Activated B cell treated with CpG ODN at 0.5 μM for 24 hours (primary cell): ENCODE measurements at regions of chr3 and their contacts with region 1.

Region 1: DNA sequence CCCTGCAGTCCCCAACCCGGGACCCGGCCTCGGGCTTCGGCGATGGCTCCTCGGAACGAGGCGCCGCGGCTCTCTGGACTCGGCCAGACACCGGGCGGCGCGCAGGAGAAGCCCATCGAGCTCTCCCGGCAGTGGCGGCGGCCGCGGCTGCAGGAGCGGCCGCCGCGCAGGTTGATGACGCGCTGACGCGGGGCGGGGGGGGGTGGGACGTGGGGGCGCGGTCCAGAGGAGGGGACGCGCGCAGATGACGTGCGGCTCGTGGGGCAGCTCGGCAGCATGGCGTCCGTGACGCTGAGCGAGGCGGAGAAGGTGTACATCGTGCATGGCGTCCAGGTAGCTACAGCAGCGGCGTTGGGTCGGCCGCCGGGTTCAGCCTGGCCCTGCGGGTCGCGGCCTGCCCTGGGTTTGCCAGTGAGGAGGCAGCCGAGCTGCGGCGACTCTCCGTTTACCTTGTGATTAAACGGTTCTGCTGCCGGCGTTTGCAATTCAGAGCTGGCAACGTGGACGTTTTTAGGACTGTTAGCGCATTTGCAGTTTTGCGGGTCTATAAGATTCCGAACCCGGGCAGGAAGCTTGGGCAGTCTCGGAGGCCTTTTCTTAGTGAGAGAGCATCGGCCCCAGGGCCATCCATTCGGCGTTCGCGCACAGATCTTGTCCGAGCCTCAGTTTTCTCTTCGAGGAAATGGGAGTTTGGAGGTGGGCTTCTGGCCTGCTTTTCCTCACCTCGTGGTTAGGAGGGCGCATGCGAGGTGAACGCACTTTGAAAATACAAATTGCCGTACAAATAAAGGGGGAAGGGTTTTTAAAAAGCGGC is at the starts of genes EXOSC7 and ZDHHC3:
- DNase-seq: peak; percentile 76
- ATAC-seq: peak; percentile 94
- H3K4me3 Mint-ChIP-seq: peak within 1 kb of the TSS; percentile 93
- H3K27ac Mint-ChIP-seq: peak within 1 kb of the TSS; percentile 88
- H3K4me1 Mint-ChIP-seq: peaks cover 49% of the 10 kb centered on the region
- H3K27me3 Mint-ChIP-seq: no peaks in the 10 kb centered on the region
- CTCF ChIP-seq: no peak
- total RNA-seq, gene EXOSC7: 42.5 and 44.0 TPM in 2 replicates
- total RNA-seq, gene ZDHHC3: 38.5 and 43.4 TPM in 2 replicates

Region 2: GRCh38 chr3:43621656-43622432 is 1354.4 kb before region 1 on chr3 and contains the start of gene ANO10:
- CTCF ChIA-PET with region 1: no interaction called
- POLR2A ChIA-PET with region 1: no interaction called
- intact Hi-C with region 1: loop called (anchors 5 kb)
- DNase-seq: peak; percentile 98
- ATAC-seq: peak; percentile 91
- H3K4me3 Mint-ChIP-seq: peak within 1 kb of the TSS; percentile 88
- H3K27ac Mint-ChIP-seq: peak within 1 kb of the TSS; percentile 77
- H3K4me1 Mint-ChIP-seq: peaks cover 13% of the 10 kb centered on the region
- H3K27me3 Mint-ChIP-seq: peaks cover 1% of the 10 kb centered on the region
- CTCF ChIP-seq: no peak
- total RNA-seq, gene ANO10: 6.4 and 8.1 TPM in 2 replicates

Region 3: DNA sequence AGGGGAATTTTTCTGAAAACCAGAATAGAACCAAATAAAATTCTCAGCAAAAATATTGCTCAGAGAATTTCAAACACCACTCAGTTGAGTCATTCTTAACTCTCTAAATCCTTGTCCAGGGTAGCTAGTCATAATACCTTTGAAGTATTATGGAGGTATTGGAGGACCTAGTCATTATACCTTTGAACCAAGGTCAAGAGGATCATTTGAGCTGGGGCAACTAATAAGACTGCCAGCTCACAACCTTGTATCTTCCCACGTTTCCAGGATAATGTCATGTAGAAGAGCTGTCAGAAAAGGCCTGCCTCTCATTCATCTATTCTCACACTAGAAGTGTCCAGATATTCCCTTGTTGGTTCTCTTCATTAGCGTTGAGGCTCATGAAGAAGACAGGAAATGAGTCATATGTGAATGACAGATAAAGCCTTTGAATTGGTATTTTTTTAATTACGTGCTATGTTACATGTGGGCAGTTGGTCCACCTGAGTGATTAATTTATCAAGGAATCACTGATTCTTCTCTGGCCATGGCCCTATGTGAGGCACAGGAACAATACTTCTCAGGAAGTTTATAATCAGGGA is 686.2 kb before region 1 on chr3:
- CTCF ChIA-PET with region 1: no interaction called
- POLR2A ChIA-PET with region 1: no interaction called
- intact Hi-C with region 1: no loop called
- DNase-seq: no peak
- ATAC-seq: no peak
- H3K4me3 Mint-ChIP-seq: no peak overlapping the region
- H3K27ac Mint-ChIP-seq: no peak overlapping the region
- H3K4me1 Mint-ChIP-seq: no peaks in the 10 kb centered on the region
- H3K27me3 Mint-ChIP-seq: peaks cover 2% of the 10 kb centered on the region
- CTCF ChIP-seq: no peak

Region 4: DNA sequence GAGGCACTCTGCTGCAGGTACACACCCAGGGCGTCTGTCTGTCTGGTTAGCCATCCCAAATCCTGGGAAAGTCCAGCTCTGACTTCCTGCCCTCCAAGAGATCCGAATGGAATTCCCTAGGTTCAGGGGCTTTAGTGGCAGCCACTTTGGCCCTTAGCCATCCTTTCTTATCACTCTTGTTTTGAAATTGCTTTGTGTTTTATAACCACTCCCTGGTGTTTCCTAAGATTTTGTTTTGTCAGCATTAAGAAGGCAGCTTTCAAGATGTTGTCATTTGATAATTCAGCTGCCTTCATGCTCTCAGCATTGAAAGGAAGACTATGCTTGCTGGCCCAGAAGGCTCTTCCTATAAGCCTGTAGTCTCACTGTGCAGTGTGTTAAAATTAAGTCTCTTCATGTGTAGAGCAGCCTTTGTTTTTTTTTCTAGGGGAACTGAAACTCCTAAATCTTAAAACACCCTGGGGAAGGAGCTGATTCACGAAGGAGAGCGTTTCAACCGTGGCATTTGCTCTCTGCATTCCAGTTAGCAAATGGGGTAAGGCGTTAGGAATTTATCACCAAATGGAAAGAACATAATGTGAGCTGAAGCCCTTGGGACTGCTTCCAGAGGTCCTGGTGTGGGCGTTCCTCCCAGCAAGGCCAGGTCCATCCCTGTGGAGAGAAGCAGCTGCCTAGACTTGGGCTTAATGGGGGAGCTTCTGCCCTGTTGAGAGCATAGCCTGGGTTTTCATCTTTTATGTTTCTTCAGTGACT is 35.7 kb after region 1 on chr3:
- CTCF ChIA-PET with region 1: no interaction called
- POLR2A ChIA-PET with region 1: interaction called, 10 read pairs
- intact Hi-C with region 1: no loop called
- DNase-seq: no peak
- ATAC-seq: peak; percentile 77
- H3K4me3 Mint-ChIP-seq: no peak overlapping the region
- H3K27ac Mint-ChIP-seq: no peak overlapping the region
- H3K4me1 Mint-ChIP-seq: peaks cover 20% of the 10 kb centered on the region
- H3K27me3 Mint-ChIP-seq: no peaks in the 10 kb centered on the region
- CTCF ChIP-seq: no peak